HCT116 (cell line): ENCODE measurements at regions of chr6 and their contacts with region 1.

Region 1: DNA sequence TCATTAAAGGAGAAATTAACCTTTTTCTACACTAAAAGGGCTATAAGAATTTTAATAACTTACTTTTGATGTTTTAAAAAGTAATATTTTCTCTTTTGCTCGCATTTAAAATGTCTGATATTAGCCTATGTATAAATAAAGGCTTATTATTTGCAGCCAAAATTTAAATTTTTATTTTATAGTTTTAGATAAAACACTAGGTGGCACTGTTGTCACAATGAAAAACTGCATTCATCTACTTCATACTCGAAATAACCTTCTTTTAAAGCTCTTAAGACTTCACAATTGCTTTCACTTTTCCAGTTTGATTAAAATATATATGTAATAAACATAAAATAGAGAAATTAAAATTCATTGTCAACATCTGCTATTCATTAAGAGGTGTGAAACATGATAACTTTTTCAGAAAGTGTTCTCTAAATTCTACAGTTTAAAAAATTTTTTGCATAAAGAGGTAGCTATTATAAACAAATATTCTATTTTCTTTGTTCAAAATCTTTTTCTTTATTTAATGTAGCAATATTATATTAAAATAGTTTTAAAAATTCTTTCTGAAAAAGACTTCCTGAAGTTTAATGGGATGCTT is 78.8 kb upstream of the DEFB112 start:
- DNase-seq: no peak
- ATAC-seq: no peak
- H3K4me3 ChIP-seq: no peak overlapping the region
- H3K27ac ChIP-seq: no peak overlapping the region
- H3K4me1 ChIP-seq: no peaks in the 10 kb centered on the region
- H3K27me3 ChIP-seq: no peaks in the 10 kb centered on the region
- CTCF ChIP-seq: peak; percentile 14 to 45 (median 24); a peak in 4 of 6 replicates
- POLR2A ChIP-seq: no peak
- RAD21 ChIP-seq: peak; percentile 36; the same call in 1 of the 2 replicates

Region 2: DNA sequence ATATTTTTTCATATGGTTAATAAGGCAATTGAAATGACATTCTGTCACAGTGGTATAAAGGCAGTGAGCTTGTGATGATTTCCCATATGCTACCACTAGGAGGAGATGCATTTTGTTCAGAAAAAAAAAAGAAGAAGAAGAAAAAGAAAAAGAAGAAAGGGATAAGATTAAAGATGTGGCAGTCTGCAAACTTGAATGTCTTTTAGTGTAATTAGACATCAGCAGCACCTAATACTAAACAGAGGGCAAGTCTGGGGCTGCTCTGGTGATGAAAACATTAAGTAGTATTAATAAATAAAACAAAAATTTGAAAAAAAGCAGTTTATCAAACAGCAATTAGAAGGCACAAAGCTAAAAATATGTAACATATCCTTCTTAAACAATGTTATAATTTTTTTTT is 16.6 kb after region 1 on chr6:
- CTCF ChIA-PET with region 1: interaction called, 13 read pairs
- POLR2A ChIA-PET with region 1: no interaction called
- RAD21 ChIA-PET with region 1: no interaction called
- intact Hi-C with region 1: no loop called
- DNase-seq: no peak
- ATAC-seq: no peak
- H3K4me3 ChIP-seq: no peak overlapping the region
- H3K27ac ChIP-seq: no peak overlapping the region
- H3K4me1 ChIP-seq: no peaks in the 10 kb centered on the region
- H3K27me3 ChIP-seq: no peaks in the 10 kb centered on the region
- CTCF ChIP-seq: peak; percentile 6 to 58 (median 50); a peak in 5 of 6 replicates
- POLR2A ChIP-seq: no peak
- RAD21 ChIP-seq: no peak

Region 3: GRCh38 chr6:50555982-50556381 is 427.5 kb after region 1 on chr6:
- CTCF ChIA-PET with region 1: no interaction called
- POLR2A ChIA-PET with region 1: no interaction called
- RAD21 ChIA-PET with region 1: no interaction called
- intact Hi-C with region 1: no loop called
- DNase-seq: no peak
- ATAC-seq: no peak
- H3K4me3 ChIP-seq: no peak overlapping the region
- H3K27ac ChIP-seq: no peak overlapping the region
- H3K4me1 ChIP-seq: no peaks in the 10 kb centered on the region
- H3K27me3 ChIP-seq: no peaks in the 10 kb centered on the region
- CTCF ChIP-seq: no peak
- POLR2A ChIP-seq: no peak
- RAD21 ChIP-seq: no peak

Region 4: DNA sequence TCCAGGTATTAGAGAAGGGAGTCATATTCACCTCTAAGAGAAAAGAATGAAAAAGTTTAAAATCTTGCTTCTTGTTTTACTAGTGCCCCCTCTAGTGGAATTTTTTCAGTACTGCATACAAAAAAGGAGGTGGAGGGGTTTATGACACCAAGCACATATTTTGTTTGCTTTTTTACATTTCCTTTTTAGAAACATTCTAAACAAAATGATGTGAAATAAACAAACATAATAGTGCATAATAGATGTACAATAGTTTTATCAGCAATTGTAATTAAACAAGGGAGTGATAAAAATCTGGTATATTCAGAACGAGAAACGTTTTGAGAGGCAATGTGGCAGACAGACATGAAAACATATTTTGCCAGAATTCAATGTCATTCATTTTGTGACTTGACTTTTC is 473.8 kb after region 1 on chr6:
- CTCF ChIA-PET with region 1: interaction called, 4 read pairs
- POLR2A ChIA-PET with region 1: no interaction called
- RAD21 ChIA-PET with region 1: no interaction called
- intact Hi-C with region 1: loop called (anchors 1 kb)
- DNase-seq: peak; percentile 2
- ATAC-seq: no peak
- H3K4me3 ChIP-seq: no peak overlapping the region
- H3K27ac ChIP-seq: no peak overlapping the region
- H3K4me1 ChIP-seq: no peaks in the 10 kb centered on the region
- H3K27me3 ChIP-seq: no peaks in the 10 kb centered on the region
- CTCF ChIP-seq: peak; percentile 20 to 80 (median 55); a peak in 4 of 6 replicates
- POLR2A ChIP-seq: no peak
- RAD21 ChIP-seq: peak; percentile 36

Region 5: GRCh38 chr6:50791900-50792508 is 663.5 kb after region 1 on chr6:
- CTCF ChIA-PET with region 1: no interaction called
- POLR2A ChIA-PET with region 1: no interaction called
- RAD21 ChIA-PET with region 1: no interaction called
- intact Hi-C with region 1: loop called (anchors 2 kb)
- DNase-seq: no peak
- ATAC-seq: no peak
- H3K4me3 ChIP-seq: no peak overlapping the region
- H3K27ac ChIP-seq: no peak overlapping the region
- H3K4me1 ChIP-seq: no peaks in the 10 kb centered on the region
- H3K27me3 ChIP-seq: no peaks in the 10 kb centered on the region
- CTCF ChIP-seq: peak; percentile 9 to 59 (median 50); a peak in 4 of 6 replicates
- POLR2A ChIP-seq: no peak
- RAD21 ChIP-seq: peak; percentile 36

Region 6: DNA sequence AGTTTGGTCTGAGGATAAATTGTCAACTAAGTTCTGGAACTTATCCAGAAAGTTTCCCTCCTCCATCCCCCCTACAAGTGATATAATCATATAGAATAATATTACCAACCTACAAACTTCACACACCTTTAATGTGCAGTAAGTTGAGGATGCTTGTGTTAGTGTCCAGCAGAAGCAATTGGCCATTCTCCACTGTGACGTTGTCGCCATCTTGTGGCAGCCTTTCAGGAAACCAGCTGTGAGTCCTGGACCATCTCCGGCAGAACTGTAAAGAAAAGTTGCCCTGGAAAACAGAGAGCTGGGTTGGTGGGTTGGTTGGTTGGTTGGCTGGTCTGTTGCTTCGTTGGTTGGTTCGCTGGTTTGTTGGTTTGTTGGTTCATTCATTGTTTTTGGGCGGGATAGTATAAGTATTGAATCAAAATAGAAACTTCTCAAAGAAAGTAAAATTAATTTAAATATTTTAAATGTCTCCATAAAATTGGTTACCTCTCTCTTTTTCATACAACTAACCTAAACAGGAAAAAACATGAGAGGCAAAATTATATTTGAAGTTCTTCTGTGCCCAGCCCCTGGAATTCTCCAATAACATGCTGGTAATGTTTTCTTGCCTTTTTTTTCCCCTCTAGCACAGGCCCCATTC is 1831.4 kb after region 1 on chr6:
- CTCF ChIA-PET with region 1: interaction called, 6 read pairs
- POLR2A ChIA-PET with region 1: no interaction called
- RAD21 ChIA-PET with region 1: no interaction called
- intact Hi-C with region 1: loop called (anchors 5 kb)
- DNase-seq: peak; percentile 43
- ATAC-seq: peak; percentile 82
- H3K4me3 ChIP-seq: no peak overlapping the region
- H3K27ac ChIP-seq: no peak overlapping the region
- H3K4me1 ChIP-seq: no peaks in the 10 kb centered on the region
- H3K27me3 ChIP-seq: 0 out of 2 replicates have a peak, but pooled peaks cover 6% of the 10 kb centered on the region
- CTCF ChIP-seq: peak; percentile 34 to 80 (median 80); a peak in 5 of 6 replicates
- POLR2A ChIP-seq: no peak
- RAD21 ChIP-seq: peak; percentile 75

Region 7: GRCh38 chr6:52020945-52021570 is 1892.5 kb after region 1 on chr6:
- CTCF ChIA-PET with region 1: interaction called, 4 read pairs
- POLR2A ChIA-PET with region 1: no interaction called
- RAD21 ChIA-PET with region 1: no interaction called
- intact Hi-C with region 1: loop called (anchors 5 kb)
- DNase-seq: peak; percentile 3
- ATAC-seq: no peak
- H3K4me3 ChIP-seq: no peak overlapping the region
- H3K27ac ChIP-seq: no peak overlapping the region
- H3K4me1 ChIP-seq: no peaks in the 10 kb centered on the region
- H3K27me3 ChIP-seq: peaks cover 4% of the 10 kb centered on the region; the same call in 1 of the 2 replicates
- CTCF ChIP-seq: peak; percentile 48 to 77 (median 50); a peak in 4 of 6 replicates
- POLR2A ChIP-seq: no peak
- RAD21 ChIP-seq: peak; percentile 67